Breast epithelium (tissue), 4 donors: ENCODE measurements at regions of chr10 and their contacts with region 1.

Region 1: DNA sequence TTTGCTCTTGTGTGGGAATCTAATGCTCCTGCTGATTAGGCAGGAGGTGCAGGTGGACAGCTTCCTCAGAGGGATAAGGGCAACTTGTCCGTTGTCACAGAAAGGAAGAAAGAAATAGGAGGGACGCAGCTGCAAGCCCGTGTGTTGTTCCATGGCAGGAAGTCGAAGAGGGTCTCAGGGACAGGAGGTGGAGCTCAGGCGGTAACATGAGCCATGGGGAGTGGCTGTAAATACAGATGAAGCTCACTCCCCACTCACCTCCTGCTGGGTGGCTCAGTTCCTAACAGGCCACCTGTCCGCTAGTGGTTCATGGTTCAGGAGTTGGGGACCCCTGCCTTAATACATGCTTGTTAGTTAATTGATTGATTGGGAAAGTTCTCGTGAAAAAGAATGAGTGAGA is 101.7 kb upstream of the SFMBT2 start:
- DNase-seq: no peak
- H3K4me3 ChIP-seq: no peak overlapping the region
- H3K27ac ChIP-seq: no peak overlapping the region
- H3K4me1 ChIP-seq: no peaks in the 10 kb centered on the region
- H3K27me3 ChIP-seq: no peaks in the 10 kb centered on the region
- CTCF ChIP-seq: no peak
- POLR2A ChIP-seq: no peak

Region 2: DNA sequence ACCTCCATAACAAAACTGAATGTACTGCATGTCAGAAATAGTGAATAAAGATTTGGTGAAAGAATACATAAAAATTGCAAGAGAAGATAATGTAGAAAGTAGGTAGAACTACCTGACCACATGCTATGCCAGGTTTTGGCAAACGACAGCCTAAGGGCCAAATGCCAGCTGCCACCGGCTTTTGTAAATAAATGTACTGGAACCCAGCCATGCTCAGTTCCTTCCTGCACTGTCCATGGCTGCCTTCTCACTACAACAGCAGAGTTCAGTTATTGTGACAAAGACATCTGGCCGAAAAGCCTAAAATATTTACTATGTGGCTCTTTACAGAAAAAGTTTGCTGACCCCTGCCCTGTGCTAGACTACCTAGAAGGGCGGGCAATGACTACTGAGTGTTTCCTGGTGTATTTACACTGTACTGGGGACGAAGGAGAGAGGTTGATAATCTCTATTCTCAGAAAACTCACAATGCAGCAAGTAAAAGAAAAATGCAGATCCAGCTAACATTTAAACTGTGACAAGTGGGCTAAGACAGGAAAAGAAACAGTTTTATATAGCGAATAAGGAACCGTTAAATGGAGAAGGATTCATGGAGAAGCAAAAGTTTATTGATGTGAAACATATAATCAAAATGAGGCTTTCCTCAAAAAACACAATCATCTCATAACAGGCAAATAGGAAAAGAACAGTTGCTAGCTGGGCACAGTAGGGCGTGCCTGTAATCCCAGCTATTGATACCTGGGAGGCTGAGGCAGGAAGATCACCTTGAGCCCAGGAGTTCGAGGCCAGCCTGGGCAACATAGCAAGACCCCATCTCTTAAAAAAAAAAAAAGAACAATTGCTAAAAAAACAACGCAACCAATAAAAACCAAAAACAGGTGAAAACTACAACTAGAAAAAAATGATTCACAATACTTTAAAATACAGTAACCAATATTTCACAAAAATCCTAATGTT is 261.6 kb after region 1 on chr10:
- intact Hi-C with region 1: no loop called
- DNase-seq: peak; percentile 47 to 83
- H3K4me3 ChIP-seq: no peak overlapping the region
- H3K27ac ChIP-seq: no peak overlapping the region
- H3K4me1 ChIP-seq: no peaks in the 10 kb centered on the region
- H3K27me3 ChIP-seq: no peaks in the 10 kb centered on the region
- CTCF ChIP-seq: no peak
- POLR2A ChIP-seq: no peak

Region 3: GRCh38 chr10:9243941-9244411 is 1731.5 kb after region 1 on chr10:
- intact Hi-C with region 1: loop called (anchors 5 kb)
- DNase-seq: no peak
- H3K4me3 ChIP-seq: no peak overlapping the region
- H3K27ac ChIP-seq: no peak overlapping the region
- H3K4me1 ChIP-seq: no peaks in the 10 kb centered on the region
- H3K27me3 ChIP-seq: no peaks in the 10 kb centered on the region
- CTCF ChIP-seq: no peak
- POLR2A ChIP-seq: no peak